Mammary epithelial cell (primary cell): ENCODE measurements at regions of chr20 and their contacts with region 1.

Region 1: DNA sequence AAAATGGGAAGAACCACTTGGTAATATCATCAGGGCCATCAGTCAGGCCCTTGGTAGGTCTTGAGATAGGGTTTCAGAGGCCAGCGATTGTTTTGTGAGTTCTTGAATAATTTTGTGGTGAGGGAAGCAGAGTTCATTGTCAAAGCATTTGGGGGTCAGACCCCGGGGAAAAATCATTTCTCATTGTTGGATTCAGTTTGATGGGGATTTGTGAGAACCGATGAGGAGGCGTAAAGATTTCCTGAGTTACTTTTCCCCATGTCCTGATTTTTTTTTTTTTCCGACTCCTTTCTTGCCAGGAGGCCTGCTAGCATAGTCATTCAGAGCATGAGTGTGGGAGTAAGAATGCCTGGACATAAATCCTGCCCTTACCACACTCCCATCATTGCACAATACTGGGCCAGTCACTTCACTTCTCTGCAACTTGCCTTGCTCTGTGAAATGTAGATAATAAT is 60.3 kb downstream of the TSHZ2 start:
- DNase-seq: peak; percentile 87
- H3K4me3 ChIP-seq: no peak overlapping the region
- H3K27ac ChIP-seq: peak overlapping the region; percentile 40
- H3K4me1 ChIP-seq: peaks cover 27% of the 10 kb centered on the region
- H3K27me3 ChIP-seq: no peaks in the 10 kb centered on the region
- CTCF ChIP-seq: no peak

Region 2: GRCh38 chr20:52601295-52601971 is 431.1 kb before region 1 on chr20:
- CTCF ChIA-PET with region 1: no interaction called
- dilution Hi-C with region 1: no loop called
- in situ Hi-C with region 1: no loop called
- intact Hi-C with region 1: no loop called
- DNase-seq: no peak
- H3K4me3 ChIP-seq: no peak overlapping the region
- H3K27ac ChIP-seq: no peak overlapping the region
- H3K4me1 ChIP-seq: no peaks in the 10 kb centered on the region
- H3K27me3 ChIP-seq: no peaks in the 10 kb centered on the region
- CTCF ChIP-seq: no peak

Region 3: GRCh38 chr20:53001498-53002301 is 30.8 kb before region 1 on chr20:
- CTCF ChIA-PET with region 1: no interaction called
- dilution Hi-C with region 1: loop called (anchors 5 kb)
- in situ Hi-C with region 1: no loop called
- intact Hi-C with region 1: no loop called
- DNase-seq: peak; percentile 49
- H3K4me3 ChIP-seq: peak overlapping the region in 1 of 3 experiments; percentile 20
- H3K27ac ChIP-seq: peak overlapping the region; percentile 64
- H3K4me1 ChIP-seq: peaks cover 20% of the 10 kb centered on the region
- H3K27me3 ChIP-seq: no peaks in the 10 kb centered on the region
- CTCF ChIP-seq: no peak

Region 4: GRCh38 chr20:53157443-53158408 is 125.2 kb after region 1 on chr20:
- CTCF ChIA-PET with region 1: no interaction called
- dilution Hi-C with region 1: no loop called
- in situ Hi-C with region 1: no loop called
- intact Hi-C with region 1: loop called (anchors 10 kb)
- DNase-seq: peak; percentile 18
- H3K4me3 ChIP-seq: no peak overlapping the region
- H3K27ac ChIP-seq: no peak overlapping the region
- H3K4me1 ChIP-seq: no peaks in the 10 kb centered on the region
- H3K27me3 ChIP-seq: no peaks in the 10 kb centered on the region
- CTCF ChIP-seq: peak; percentile 48 to 66

Region 5: DNA sequence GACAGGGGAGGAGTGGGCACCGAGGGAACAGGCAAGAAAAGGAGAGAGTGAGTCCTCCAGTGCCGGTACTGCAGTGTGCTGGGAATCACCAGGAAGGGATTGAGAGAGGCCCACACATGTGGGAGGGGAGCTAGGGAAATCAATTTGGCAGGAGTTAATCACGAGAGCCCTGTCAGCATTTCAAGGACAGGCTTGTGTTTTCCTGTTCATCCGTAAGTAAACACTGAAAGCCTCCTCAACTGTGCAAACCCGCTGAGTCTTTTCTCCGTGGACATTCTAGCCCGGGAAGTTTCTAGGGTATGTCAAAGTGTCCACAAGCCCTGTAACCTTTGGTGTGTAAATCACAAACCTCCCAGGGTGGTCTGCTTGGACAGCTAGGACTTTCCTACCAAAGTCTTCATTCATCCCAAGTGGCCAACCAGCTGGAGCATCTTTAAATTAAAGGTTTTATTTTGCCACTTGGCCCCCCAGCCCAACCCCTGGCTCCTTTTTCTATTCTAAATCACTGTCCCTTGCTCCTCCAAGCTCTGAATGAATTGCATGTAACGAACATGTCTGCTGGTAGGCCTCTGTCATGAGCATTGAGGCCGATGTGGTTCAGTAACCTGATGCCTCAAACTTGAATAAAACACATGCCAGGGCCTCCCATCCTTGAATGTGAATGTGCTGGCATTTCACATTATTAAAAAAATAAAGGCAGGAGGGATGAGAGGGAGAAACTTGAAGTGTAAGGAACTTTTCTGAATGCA is 412.1 kb after region 1 on chr20:
- CTCF ChIA-PET with region 1: no interaction called
- dilution Hi-C with region 1: no loop called
- in situ Hi-C with region 1: no loop called
- intact Hi-C with region 1: no loop called
- DNase-seq: no peak
- H3K4me3 ChIP-seq: no peak overlapping the region
- H3K27ac ChIP-seq: no peak overlapping the region
- H3K4me1 ChIP-seq: no peaks in the 10 kb centered on the region
- H3K27me3 ChIP-seq: no peaks in the 10 kb centered on the region
- CTCF ChIP-seq: no peak